Heart right ventricle (tissue), 16 donors: ENCODE measurements at regions of chr1 and their contacts with region 1.

Region 1: DNA sequence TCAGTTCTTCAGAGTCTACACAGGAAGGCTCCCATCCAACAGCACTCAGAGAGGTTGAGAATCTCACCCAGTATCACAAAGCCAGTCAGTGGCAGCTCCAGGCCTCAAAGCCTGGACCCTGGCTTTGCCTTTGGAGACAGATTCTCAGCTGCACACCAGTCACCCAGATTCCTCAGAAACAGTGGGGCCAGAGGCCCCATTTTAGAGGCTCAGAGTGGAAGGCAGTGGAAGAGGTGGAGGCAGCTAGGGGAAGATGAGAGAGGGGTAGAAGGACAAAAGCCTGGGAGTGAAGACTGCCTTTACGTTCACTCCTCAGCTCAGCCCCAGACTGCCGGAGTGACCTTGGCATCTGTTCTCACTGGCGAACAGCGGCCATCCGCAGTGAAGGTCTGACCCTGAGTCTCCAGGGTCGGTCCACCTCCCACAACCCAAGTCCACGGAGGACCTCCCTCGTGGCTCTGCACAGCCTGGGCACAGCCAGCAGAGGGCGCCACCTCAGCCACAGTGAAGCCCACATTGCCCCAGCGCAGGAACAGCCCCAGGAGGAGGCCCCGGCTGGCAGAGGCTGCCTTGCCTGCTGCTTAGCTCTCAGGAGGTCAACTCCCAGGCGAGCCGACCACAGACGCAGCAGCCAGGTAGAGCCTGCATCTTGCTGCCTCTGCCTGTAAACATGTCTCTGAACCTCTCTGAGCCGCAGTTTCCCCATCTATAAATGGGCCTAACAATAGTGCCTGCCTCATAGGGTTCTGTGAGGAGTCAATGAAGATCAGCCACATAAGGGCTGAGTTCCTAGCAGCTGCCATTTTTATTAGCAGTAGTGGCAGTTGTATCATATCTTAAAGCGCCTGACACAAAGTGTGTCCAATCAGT is 5.9 kb upstream of the FNDC5 start:
- DNase-seq: peak in 1 of 2 donors; percentile 63
- ATAC-seq: peak in 6 of 8 donors; percentile 43 to 75 (median 62)
- H3K4me3 ChIP-seq: no peak overlapping the region
- H3K27ac ChIP-seq: no peak overlapping the region
- H3K4me1 ChIP-seq: peaks cover 8 to 49% (median 30%) of the 10 kb centered on the region in 9 donors
- H3K27me3 ChIP-seq: peaks cover 0 to 32% (median 0%) of the 10 kb centered on the region in 7 donors
- CTCF ChIP-seq: peak; percentile 64 to 90 (median 84)

Region 2: GRCh38 chr1:32521165-32521564 is 355.4 kb before region 1 on chr1:
- intact Hi-C with region 1: loop called in 1 of 10 experiments (anchors 10 kb)
- DNase-seq: no peak
- ATAC-seq: no peak
- H3K4me3 ChIP-seq: peak overlapping the region in 3 of 10 donors; percentile 41 to 46 (median 45)
- H3K27ac ChIP-seq: no peak overlapping the region
- H3K4me1 ChIP-seq: peaks cover 0 to 10% (median 0%) of the 10 kb centered on the region in 9 donors
- H3K27me3 ChIP-seq: no peaks in the 10 kb centered on the region
- CTCF ChIP-seq: no peak

Region 3: GRCh38 chr1:32716312-32717148 is 160.0 kb before region 1 on chr1:
- intact Hi-C with region 1: loop called in 7 of 10 experiments (anchors 2 to 10 kb)
- DNase-seq: peak in 1 of 2 donors; percentile 57
- ATAC-seq: peak; percentile 40 to 78 (median 56)
- H3K4me3 ChIP-seq: no peak overlapping the region
- H3K27ac ChIP-seq: no peak overlapping the region
- H3K4me1 ChIP-seq: peaks cover 0 to 9% (median 0%) of the 10 kb centered on the region in 9 donors
- H3K27me3 ChIP-seq: no peaks in the 10 kb centered on the region
- CTCF ChIP-seq: no peak

Region 4: DNA sequence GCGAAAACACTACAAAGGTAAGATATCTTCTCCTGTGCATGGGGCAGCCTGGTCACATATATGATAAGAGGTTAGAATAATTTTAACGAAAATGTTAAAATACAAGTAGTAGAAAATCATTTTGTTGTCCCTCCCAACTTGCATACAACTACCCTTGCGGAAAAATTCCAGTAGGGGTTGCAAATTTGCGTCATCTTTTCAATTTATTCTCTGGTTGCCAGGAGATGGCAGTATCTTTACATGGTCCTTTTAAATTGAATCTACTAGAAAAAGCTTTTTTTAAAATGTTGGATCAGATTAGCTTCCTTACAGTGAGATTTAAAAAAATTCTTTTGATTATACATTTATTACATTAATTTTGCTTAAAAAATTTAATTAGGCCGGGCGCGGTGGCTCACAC is 48.2 kb before region 1 on chr1:
- intact Hi-C with region 1: loop called in 1 of 10 experiments (anchors 10 kb)
- DNase-seq: no peak
- ATAC-seq: no peak
- H3K4me3 ChIP-seq: no peak overlapping the region
- H3K27ac ChIP-seq: no peak overlapping the region
- H3K4me1 ChIP-seq: peaks cover 0 to 5% (median 0%) of the 10 kb centered on the region in 9 donors
- H3K27me3 ChIP-seq: no peaks in the 10 kb centered on the region
- CTCF ChIP-seq: peak in 7 of 9 donors; percentile 19 to 47 (median 32)

Region 5: DNA sequence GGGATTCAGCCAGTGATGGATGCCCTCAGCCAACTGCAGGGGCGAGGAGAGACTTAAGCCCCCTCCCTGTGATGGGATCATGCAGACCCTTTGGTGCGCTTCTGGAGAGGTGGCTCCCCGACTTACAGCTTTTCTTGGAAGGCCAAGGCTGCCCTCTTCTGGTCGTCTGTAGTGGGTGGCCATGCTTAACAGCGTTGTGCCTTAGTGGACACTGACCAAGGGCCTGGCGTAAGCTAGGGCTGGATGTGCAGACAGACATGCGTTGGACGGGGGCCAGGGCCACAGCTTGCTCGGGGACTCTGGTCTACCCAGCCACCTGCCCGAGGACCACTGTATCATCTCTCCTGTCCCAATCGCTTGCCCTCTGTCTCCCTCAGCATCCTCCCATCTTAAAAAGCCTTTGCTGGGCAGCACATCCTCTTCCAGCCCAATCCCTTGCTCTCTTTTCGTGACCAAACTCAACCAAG is 209.8 kb after region 1 on chr1:
- intact Hi-C with region 1: loop called in 5 of 10 experiments (anchors 2 to 5 kb)
- DNase-seq: peak; percentile 66 to 76
- ATAC-seq: peak; percentile 66 to 88 (median 84)
- H3K4me3 ChIP-seq: no peak overlapping the region
- H3K27ac ChIP-seq: no peak overlapping the region
- H3K4me1 ChIP-seq: peaks cover 0 to 20% (median 9%) of the 10 kb centered on the region in 9 donors
- H3K27me3 ChIP-seq: peaks cover 0 to 10% (median 0%) of the 10 kb centered on the region in 7 donors
- CTCF ChIP-seq: peak; percentile 62 to 89 (median 78)